ENCODE measurements at regions of chr5 and their contacts with region 1.

Region 1: GRCh38 chr5:170434966-170435605 is 45.9 kb upstream of the KCNMB1 start:
- DNase-seq: peak; percentile 57 to 97 (median 75)

Region 2: GRCh38 chr5:170633235-170634081 is 198.4 kb after region 1 on chr5:
- intact Hi-C with region 1: loop called (anchors 1 kb)
- DNase-seq: peak in 1 of 10 donors; percentile 61

Measured in posterior cingulate gyrus (tissue), 11 donors.